ENCODE measurements at regions of chr17 and their contacts with region 1.

Region 1: DNA sequence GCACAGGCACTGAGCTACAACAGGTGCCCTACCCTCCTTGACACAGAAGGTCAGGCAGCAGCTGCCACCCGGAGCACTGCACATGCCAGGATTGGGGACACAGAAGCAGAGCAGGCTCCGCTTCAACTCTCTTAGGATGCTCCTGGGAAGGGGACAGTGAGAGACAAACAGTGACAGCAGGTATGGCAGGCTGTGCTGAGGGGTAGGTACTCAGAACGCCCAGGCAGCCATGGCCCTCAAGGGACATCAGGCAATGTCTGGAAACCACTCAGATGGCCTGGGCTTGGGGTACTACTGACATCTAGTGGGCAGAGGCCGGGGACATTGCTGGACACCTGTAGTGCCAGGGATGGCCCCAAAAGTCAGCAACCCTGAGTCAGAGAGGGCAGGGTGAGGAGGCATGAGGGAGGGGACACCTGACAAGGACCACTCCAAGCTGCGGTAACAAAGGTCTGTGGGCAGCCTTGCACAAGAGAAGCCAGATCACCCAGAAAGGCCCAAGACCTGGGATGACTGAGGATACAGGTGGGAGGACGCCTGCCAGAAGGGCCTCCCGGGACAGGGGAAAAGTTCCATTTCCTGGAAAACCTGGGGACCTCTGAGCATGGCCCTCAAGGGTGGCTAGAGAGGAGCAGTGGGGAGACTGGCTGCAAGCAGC is 21.2 kb downstream of the PEMT start:
- DNase-seq: peak; percentile 77 to 79
- H3K4me3 ChIP-seq: no peak overlapping the region
- H3K27ac ChIP-seq: peak overlapping the region in 1 of 5 donors; percentile 15
- H3K4me1 ChIP-seq: peaks cover 25 to 62% (median 53%) of the 10 kb centered on the region in 4 donors
- H3K27me3 ChIP-seq: no peaks in the 10 kb centered on the region
- CTCF ChIP-seq: peak in 5 of 7 experiments; percentile 22 to 71 (median 51)
- EP300 ChIP-seq: no peak
- POLR2A ChIP-seq: no peak

Region 2: GRCh38 chr17:17484451-17484899 is 85.8 kb before region 1 on chr17:
- intact Hi-C with region 1: no loop called
- DNase-seq: no peak
- H3K4me3 ChIP-seq: no peak overlapping the region
- H3K27ac ChIP-seq: no peak overlapping the region
- H3K4me1 ChIP-seq: peaks cover 4 to 33% (median 21%) of the 10 kb centered on the region in 4 donors
- H3K27me3 ChIP-seq: no peaks in the 10 kb centered on the region
- CTCF ChIP-seq: no peak
- EP300 ChIP-seq: no peak
- POLR2A ChIP-seq: no peak

Region 3: GRCh38 chr17:17506811-17507464 is 63.3 kb before region 1 on chr17:
- intact Hi-C with region 1: loop called (anchors 5 kb)
- DNase-seq: peak; percentile 46 to 68
- H3K4me3 ChIP-seq: no peak overlapping the region
- H3K27ac ChIP-seq: peak overlapping the region in 2 of 5 donors; percentile 21 to 46
- H3K4me1 ChIP-seq: peaks cover 0 to 18% (median 11%) of the 10 kb centered on the region in 4 donors
- H3K27me3 ChIP-seq: no peaks in the 10 kb centered on the region
- CTCF ChIP-seq: no peak
- EP300 ChIP-seq: no peak
- POLR2A ChIP-seq: no peak